PC-9 (cell line): ENCODE measurements at regions of chr18 and their contacts with region 1.

Region 1: DNA sequence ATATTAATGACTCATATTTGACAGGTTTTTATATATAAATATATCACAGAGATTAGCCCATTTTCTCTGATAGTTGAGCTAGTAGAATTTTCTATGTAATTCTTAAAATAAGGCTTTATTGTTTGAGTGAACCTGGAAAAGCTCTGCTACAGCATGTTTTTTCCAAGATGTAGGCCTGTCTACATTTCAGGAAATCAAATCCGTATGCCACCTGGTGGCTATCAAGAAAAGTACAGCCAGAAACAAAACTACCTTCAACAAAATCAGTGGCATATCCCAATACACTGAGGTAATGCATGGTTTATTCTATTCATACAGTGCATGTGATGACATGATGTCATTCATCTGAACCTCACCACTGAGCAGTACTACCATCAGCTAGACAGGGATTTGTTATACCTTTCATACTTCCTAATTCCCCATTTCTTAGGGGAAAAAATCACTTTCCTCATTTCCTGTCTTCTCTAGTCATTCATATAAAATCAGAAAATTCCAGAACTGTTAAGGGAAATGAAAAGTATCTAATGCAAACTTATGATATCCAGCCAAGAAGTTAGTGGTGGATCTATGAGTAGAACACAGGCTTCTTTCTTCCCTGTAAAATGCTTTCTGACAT is 310.4 kb upstream of the SYT4 start:
- DNase-seq: no peak
- H3K4me3 ChIP-seq: no peak overlapping the region
- H3K27ac ChIP-seq: no peak overlapping the region
- H3K4me1 ChIP-seq: no peaks in the 10 kb centered on the region
- H3K27me3 ChIP-seq: no peaks in the 10 kb centered on the region
- CTCF ChIP-seq: peak; percentile 72

Region 2: GRCh38 chr18:43405097-43405496 is 182.5 kb before region 1 on chr18:
- CTCF ChIA-PET with region 1: no interaction called
- POLR2A ChIA-PET with region 1: no interaction called
- intact Hi-C with region 1: no loop called
- DNase-seq: no peak
- H3K4me3 ChIP-seq: no peak overlapping the region
- H3K27ac ChIP-seq: no peak overlapping the region
- H3K4me1 ChIP-seq: no peaks in the 10 kb centered on the region
- H3K27me3 ChIP-seq: no peaks in the 10 kb centered on the region
- CTCF ChIP-seq: no peak

Region 3: GRCh38 chr18:43571078-43571689 is 16.5 kb before region 1 on chr18:
- CTCF ChIA-PET with region 1: interaction called, 7 read pairs
- POLR2A ChIA-PET with region 1: no interaction called
- intact Hi-C with region 1: loop called (anchors 1 kb)
- DNase-seq: no peak
- H3K4me3 ChIP-seq: no peak overlapping the region
- H3K27ac ChIP-seq: no peak overlapping the region
- H3K4me1 ChIP-seq: no peaks in the 10 kb centered on the region
- H3K27me3 ChIP-seq: no peaks in the 10 kb centered on the region
- CTCF ChIP-seq: peak; percentile 78